Gastrocnemius medialis (tissue), 4 donors: ENCODE measurements at regions of chr3 and their contacts with region 1.

Region 1: GRCh38 chr3:122754929-122755328 is 38.7 kb downstream of the HSPBAP1 start:
- DNase-seq: no peak
- ATAC-seq: peak; percentile 45 to 90
- H3K4me3 ChIP-seq: no peak overlapping the region
- H3K27ac ChIP-seq: no peak overlapping the region
- H3K4me1 ChIP-seq: peaks cover 1 to 10% of the 10 kb centered on the region in 2 donors
- H3K27me3 ChIP-seq: no peaks in the 10 kb centered on the region
- CTCF ChIP-seq: peak; percentile 40 to 72 (median 57)
- POLR2A ChIP-seq: no peak

Region 2: DNA sequence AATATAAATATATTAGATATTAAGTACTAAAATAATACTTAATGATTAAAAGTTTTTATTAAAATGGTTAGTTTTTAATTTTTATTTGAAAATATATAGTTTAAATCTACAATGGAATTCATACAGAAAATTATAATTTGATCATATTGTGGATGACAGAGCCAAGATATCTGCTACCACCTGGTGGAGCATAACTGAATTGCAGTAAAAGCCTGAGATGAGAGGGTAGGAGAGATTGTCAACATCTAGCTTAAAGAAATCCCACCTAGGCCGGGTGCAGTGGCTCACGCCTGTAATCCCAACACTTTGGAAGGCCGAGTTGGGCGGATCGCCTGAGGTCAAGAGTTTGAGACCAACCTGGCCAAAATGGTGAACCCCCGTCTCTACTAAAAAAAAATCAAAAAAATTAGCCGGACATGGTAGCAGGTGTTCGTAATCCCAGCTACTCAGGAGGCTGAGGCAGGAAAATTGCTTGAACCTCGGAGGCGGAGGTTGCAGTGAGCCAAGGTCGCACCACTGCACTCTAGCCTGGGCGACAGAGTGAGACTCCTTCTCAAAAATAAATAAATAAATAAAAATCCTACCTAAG is 455.0 kb before region 1 on chr3:
- in situ Hi-C with region 1: no loop called
- intact Hi-C with region 1: no loop called
- DNase-seq: no peak
- ATAC-seq: no peak
- H3K4me3 ChIP-seq: no peak overlapping the region
- H3K27ac ChIP-seq: no peak overlapping the region
- H3K4me1 ChIP-seq: no peaks in the 10 kb centered on the region
- H3K27me3 ChIP-seq: no peaks in the 10 kb centered on the region
- CTCF ChIP-seq: peak in 1 of 5 experiments; percentile 21
- POLR2A ChIP-seq: no peak

Region 3: GRCh38 chr3:122824465-122825381 is 69.8 kb after region 1 on chr3:
- in situ Hi-C with region 1: no loop called
- intact Hi-C with region 1: loop called (anchors 5 kb)
- DNase-seq: no peak
- ATAC-seq: peak; percentile 64 to 94
- H3K4me3 ChIP-seq: no peak overlapping the region
- H3K27ac ChIP-seq: peak overlapping the region; percentile 72 to 79 (median 75)
- H3K4me1 ChIP-seq: peaks cover 18 to 25% of the 10 kb centered on the region in 2 donors
- H3K27me3 ChIP-seq: no peaks in the 10 kb centered on the region
- CTCF ChIP-seq: no peak
- POLR2A ChIP-seq: peak in 1 of 2 donors; percentile 18

Region 4: GRCh38 chr3:122890077-122890719 is 135.3 kb after region 1 on chr3:
- in situ Hi-C with region 1: no loop called
- intact Hi-C with region 1: loop called (anchors 5 kb)
- DNase-seq: peak; percentile 54 to 57
- ATAC-seq: peak; percentile 26 to 44
- H3K4me3 ChIP-seq: no peak overlapping the region
- H3K27ac ChIP-seq: peak overlapping the region in 2 of 4 donors; percentile 34 to 60
- H3K4me1 ChIP-seq: peaks cover 43 to 44% of the 10 kb centered on the region in 2 donors
- H3K27me3 ChIP-seq: no peaks in the 10 kb centered on the region
- CTCF ChIP-seq: no peak
- POLR2A ChIP-seq: no peak

Region 5: DNA sequence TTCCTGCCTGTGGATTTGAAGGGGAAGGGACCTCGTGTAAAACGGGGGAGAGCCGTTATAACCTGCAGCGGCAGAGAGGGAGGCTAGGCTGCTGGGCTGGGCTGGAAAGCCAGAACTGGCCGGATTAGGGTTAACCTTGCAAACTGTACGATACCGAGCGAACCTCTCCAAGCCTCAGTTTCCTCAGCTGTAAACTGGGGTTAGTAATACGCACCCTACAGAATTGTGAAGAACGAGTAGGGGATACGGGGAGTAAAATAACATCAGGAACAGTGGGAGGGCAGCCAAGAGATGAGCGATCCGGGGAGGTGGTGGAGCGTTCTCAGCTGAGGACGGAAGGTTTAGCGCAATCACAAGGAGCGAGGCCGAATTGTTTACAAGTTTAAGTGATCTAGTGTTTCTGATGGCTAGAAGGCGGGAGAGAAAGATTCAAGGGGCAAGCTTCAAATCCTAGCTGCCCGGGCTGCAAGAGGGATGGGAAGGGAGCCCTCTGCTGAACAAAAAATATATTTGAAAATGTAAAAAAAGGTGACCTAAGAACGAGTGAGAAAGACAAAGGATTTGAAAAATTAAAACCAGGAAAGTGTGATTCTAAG is 273.4 kb after region 1 on chr3:
- in situ Hi-C with region 1: no loop called
- intact Hi-C with region 1: loop called (anchors 5 kb)
- DNase-seq: no peak
- ATAC-seq: peak; percentile 53 to 55
- H3K4me3 ChIP-seq: peak overlapping the region; percentile 57 to 66 (median 64)
- H3K27ac ChIP-seq: peak overlapping the region in 1 of 4 donors; percentile 32
- H3K4me1 ChIP-seq: peaks cover 16 to 23% of the 10 kb centered on the region in 2 donors
- H3K27me3 ChIP-seq: peaks cover 43 to 65% (median 48%) of the 10 kb centered on the region in 3 donors
- CTCF ChIP-seq: peak in 2 of 5 experiments; percentile 22 to 28
- POLR2A ChIP-seq: no peak